Endothelial cell of umbilical vein (primary cell): ENCODE measurements at regions of chr5 and their contacts with region 1.

Region 1: GRCh38 chr5:73540192-73540591 is 25.2 kb downstream of the ANKRA2 start:
- DNase-seq: peak; percentile 38
- H3K4me3 ChIP-seq: no peak overlapping the region
- H3K27ac ChIP-seq: no peak overlapping the region
- H3K4me1 ChIP-seq: peaks cover 27% of the 10 kb centered on the region
- H3K27me3 ChIP-seq: no peaks in the 10 kb centered on the region
- CTCF ChIP-seq: no peak
- POLR2A ChIP-seq: no peak

Region 2: DNA sequence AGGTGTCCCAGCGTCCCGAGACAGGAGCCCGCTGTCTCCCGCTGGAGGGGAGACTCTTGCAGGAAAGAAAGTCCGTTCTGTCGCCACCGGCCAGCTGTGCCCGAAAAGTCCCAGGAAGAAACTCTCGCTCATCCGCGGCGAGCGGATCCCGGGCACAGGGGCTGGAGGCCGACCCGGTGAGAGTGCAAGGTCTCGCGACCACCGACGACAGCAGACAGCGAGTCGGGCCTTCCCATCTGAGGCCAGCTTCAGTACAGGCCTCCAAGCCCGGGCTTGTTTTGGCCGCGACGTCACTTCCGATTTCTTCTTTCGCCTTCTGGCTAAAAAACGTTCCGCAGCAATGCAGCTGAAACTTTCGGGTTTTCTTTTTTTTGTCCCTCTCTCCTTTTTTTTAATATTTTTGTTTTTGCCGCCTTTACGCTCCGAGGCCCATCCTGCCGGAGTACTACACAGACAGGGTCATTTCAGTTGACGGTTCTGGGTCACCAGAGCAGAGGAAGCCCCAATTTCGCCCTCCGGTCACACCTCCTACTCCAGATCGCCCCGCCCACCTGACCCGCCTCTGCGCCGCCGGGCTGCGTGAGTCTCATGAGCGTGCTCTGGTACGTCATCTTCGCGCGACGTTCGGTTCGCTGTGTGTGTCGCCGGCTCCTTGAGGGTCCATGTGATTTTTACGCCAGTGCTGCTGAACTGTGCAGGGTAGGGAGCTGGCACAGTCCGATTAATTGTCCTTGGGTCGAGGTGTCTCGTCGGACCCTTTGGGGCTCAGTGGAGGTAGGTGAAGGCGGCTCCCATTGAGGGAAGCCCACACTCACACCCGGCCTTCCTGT is 25.2 kb after region 1 on chr5 and contains the starts of genes ANKRA2 and UTP15:
- CTCF ChIA-PET with region 1: no interaction called
- POLR2A ChIA-PET with region 1: no interaction called
- dilution Hi-C with region 1: no loop called
- intact Hi-C with region 1: loop called (anchors 2 kb)
- DNase-seq: peak; percentile 97
- H3K4me3 ChIP-seq: peak within 1 kb of the TSS; percentile 71 to 92 (median 84)
- H3K27ac ChIP-seq: peak within 1 kb of the TSS; percentile 63
- H3K4me1 ChIP-seq: peaks cover 18% of the 10 kb centered on the region
- H3K27me3 ChIP-seq: no peaks in the 10 kb centered on the region
- CTCF ChIP-seq: no peak
- POLR2A ChIP-seq: peak; percentile 61
- total RNA-seq, gene ANKRA2: 17.2 and 19.5 TPM in 2 replicates
- total RNA-seq, gene UTP15: 24.8 and 25.2 TPM in 2 replicates

Region 3: DNA sequence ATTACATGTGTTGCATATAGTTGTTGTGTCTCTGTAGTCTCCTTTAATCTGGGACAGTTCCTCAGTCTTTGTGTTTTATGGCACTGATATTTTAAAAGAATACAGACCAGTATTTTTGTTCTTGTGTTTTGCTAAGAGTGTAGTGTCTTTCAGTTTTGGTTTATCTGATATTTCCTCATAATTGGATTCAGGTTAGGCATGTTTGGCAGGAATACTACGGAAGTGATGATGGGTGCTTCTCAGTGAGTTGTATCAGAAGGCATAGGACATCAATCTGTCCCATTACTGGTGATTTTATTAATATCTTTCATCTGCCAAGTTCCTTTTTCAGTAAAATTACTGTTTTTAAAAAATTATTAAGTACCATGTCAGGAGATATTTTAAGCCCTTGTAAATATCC is 298.7 kb after region 1 on chr5:
- CTCF ChIA-PET with region 1: no interaction called
- POLR2A ChIA-PET with region 1: no interaction called
- dilution Hi-C with region 1: no loop called
- intact Hi-C with region 1: no loop called
- DNase-seq: no peak
- H3K4me3 ChIP-seq: no peak overlapping the region
- H3K27ac ChIP-seq: no peak overlapping the region
- H3K4me1 ChIP-seq: peaks cover 13% of the 10 kb centered on the region
- H3K27me3 ChIP-seq: no peaks in the 10 kb centered on the region
- CTCF ChIP-seq: no peak
- POLR2A ChIP-seq: no peak